PC-3 (cell line): ENCODE measurements at regions of chr3 and their contacts with region 1.

Region 1: GRCh38 chr3:9649791-9650521 is 651 bp downstream of the MTMR14 start:
- DNase-seq: no peak
- ATAC-seq: peak; percentile 3
- H3K4me3 ChIP-seq: peak overlapping the region; percentile 92
- H3K27ac ChIP-seq: no peak overlapping the region
- H3K4me1 ChIP-seq: peaks cover 8% of the 10 kb centered on the region
- H3K27me3 ChIP-seq: no peaks in the 10 kb centered on the region
- CTCF ChIP-seq: no peak

Region 2: GRCh38 chr3:9503283-9503682 is 146.7 kb before region 1 on chr3:
- CTCF ChIA-PET with region 1: interaction called, 5 read pairs
- POLR2A ChIA-PET with region 1: no interaction called
- intact Hi-C with region 1: loop called (anchors 1 kb)
- DNase-seq: peak; percentile 86
- ATAC-seq: peak; percentile 64
- H3K4me3 ChIP-seq: no peak overlapping the region
- H3K27ac ChIP-seq: no peak overlapping the region
- H3K4me1 ChIP-seq: peaks cover 11% of the 10 kb centered on the region
- H3K27me3 ChIP-seq: no peaks in the 10 kb centered on the region
- CTCF ChIP-seq: peak; percentile 97

Region 3: DNA sequence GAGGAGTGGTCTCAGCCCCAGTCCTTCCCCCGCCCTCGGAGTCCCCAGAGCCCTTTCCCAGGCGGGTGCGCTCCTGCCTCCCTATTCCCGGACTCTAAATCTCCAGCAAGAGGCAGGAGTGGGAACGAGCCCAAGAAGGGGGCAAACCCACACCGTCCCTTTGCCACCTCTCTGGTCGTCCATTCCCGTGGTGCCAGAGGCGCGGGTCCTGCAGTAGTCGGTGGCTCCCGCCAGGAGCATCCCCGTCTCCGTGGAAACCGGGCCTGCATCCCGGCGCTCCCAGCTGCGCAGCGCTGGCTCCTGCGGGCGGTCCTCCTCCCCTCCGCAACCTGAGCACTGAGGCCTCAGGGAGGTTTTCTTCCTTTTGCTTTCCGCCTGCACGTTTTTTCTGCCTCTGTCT is 141.2 kb before region 1 on chr3:
- CTCF ChIA-PET with region 1: interaction called, 5 read pairs
- POLR2A ChIA-PET with region 1: interaction called, 29 read pairs
- intact Hi-C with region 1: loop called (anchors 1 kb)
- DNase-seq: no peak
- ATAC-seq: no peak
- H3K4me3 ChIP-seq: no peak overlapping the region
- H3K27ac ChIP-seq: no peak overlapping the region
- H3K4me1 ChIP-seq: no peaks in the 10 kb centered on the region
- H3K27me3 ChIP-seq: peaks cover 17% of the 10 kb centered on the region
- CTCF ChIP-seq: no peak